RWPE1 (cell line): ENCODE measurements at regions of chr5 and their contacts with region 1.

Region 1: DNA sequence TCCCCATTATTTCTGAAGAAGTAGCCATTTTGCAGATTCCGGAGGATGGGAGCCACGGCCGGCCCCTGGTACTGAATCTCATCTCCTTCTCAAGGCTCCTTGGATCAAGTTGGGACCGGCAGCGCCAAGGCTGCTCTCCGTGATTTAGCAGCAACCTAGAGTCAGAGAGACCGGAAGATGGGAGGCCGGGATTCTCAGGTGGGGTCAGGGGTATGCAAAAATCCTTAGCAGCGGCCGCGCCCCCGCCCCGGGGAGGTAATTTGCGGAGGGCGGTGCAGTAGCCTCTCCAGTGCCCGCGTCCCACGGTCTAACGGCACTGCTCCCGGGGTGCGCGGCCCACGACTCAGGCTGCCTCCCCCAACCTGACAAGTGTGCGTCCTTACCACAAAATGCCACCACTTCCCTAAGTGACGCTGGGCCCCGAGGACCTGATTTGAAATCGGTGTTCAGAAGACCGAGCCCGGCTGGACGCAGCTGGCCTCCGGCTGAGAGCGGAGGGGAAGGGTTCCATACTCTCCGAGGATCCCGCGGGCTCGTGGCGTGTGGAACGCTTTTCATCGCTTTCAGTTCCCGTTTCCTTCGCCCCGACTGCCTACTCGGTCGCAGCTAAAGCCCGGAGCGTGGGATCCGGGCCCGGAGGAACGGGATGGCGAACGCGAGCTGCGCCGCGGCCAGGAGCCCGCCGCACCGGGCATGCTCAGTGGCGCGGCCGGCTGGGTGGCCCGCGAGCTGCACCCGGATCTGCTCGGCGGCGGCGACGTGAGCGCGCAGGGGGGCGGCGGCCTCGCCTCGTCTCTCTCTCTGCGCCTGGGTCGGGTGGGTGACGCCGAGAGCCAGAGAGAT is at the start of gene SCAMP1:
- DNase-seq: peak; percentile 94
- H3K27ac ChIP-seq: peak within 1 kb of the TSS; percentile 92
- CTCF ChIP-seq: peak; percentile 58

Region 2: GRCh38 chr5:78294248-78295034 is 65.6 kb before region 1 on chr5 and contains the start of gene AP3B1:
- CTCF ChIA-PET with region 1: interaction called, 3 read pairs
- POLR2A ChIA-PET with region 1: interaction called, 10 read pairs
- DNase-seq: peak; percentile 99
- H3K27ac ChIP-seq: peak within 1 kb of the TSS; percentile 94
- CTCF ChIP-seq: no peak

Region 3: GRCh38 chr5:78416677-78417425 is 56.8 kb after region 1 on chr5:
- CTCF ChIA-PET with region 1: interaction called, 10 read pairs
- POLR2A ChIA-PET with region 1: no interaction called
- DNase-seq: no peak
- H3K27ac ChIP-seq: no peak overlapping the region
- CTCF ChIP-seq: no peak

Region 4: DNA sequence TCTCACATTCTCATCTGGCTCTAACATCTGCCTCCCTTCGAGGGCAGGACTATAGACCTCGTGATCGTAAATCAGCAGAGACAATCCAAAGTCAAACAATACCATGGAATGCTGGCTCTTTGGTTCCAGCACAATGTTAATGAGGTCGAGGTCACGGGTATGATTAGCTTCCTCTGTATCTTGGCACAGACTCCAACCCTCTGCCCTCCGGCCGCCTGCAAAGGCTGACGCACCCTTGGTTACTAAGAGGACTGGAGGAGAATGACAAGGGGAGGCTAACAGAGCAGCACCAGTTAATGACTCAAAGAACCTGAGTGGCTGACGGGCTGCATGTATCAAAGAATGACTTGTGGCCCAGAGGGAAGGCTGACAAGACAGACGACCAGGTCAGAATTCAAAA is 278.4 kb after region 1 on chr5:
- CTCF ChIA-PET with region 1: no interaction called
- POLR2A ChIA-PET with region 1: no interaction called
- DNase-seq: peak; percentile 99
- H3K27ac ChIP-seq: peak overlapping the region; percentile 82
- CTCF ChIP-seq: no peak